Transverse colon (tissue), 4 donors: ENCODE measurements at regions of chr9 and their contacts with region 1.

Region 1: DNA sequence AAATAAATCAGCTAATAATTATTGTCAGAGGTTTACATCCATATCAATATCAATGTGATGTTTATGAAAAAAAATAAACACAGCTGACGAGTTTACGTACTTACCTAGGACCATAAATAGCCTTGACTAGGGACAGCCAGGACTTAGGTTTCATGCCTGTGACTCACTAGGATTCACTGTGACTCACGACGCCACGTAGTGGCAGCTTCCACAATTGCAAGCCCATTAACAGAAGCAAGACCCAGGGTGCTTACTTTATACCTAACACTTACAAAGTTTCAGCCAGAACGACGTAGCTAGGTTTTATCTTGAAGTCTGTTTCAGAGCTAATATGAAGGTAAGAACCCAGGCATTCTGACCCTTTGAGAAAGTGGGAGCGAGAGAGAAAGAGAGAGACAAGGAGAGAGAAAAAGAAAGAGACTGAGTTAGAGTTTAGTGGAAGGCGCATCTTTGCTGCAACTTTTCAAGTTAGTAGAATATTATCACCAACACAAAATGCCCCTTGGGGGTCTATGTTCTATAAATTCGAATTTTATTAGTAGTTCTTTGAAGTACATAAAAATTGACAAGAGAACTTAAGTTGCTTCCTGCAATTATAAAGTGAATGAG is 191.2 kb downstream of the GNA14 start:
- DNase-seq: peak; percentile 92
- H3K4me3 ChIP-seq: no peak overlapping the region
- H3K27ac ChIP-seq: no peak overlapping the region
- H3K4me1 ChIP-seq: peaks cover 0 to 6% (median 1%) of the 10 kb centered on the region in 4 donors
- H3K27me3 ChIP-seq: no peaks in the 10 kb centered on the region
- CTCF ChIP-seq: peak; percentile 88 to 96 (median 92)
- EP300 ChIP-seq: no peak
- POLR2A ChIP-seq: no peak

Region 2: DNA sequence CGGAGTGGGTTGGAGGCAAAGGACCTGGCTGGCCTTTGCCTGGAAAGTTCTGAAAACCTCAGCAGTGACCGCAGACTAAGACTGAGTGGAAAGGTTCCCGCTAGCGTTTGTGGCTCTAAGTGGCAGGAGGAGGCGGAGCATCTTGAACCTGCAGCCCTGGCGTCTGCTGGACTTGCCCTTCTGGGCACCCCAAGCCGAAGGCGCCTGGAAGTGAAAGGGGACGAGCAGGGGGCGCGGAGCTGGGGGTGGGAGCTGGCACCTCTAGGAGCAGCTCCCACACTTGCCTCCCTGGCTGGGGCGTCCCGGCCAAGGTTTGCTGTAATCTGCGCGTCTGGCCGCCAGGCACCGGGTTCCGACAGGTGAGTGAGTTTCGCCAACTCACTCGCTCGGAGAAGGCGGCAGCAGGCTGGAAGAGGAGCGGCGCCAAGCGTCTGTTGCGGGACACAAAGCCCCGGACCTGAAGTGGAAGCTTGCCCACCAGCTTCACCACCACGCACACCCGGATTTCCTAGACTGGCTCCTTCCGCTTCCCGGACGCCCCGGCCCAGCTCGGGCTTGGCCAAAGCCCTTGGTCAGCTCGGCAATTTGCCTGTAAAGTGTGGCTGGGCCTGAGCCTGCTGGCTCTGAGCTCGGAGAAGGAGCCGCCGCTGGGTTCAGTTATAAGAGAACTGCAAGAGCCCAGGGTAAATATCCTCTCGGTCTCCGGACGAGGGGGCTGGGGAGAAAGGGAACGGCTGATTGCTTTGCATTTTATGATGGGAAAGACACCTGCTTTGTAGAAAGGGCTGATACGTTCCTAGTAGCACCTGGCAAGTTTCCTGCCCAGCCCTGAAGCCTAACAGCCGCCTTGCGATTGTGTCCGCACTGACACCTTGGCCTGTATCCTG is 191.5 kb after region 1 on chr9 and contains the start of gene GNA14:
- in situ Hi-C with region 1: loop called in 1 of 4 experiments (anchors 25 kb)
- intact Hi-C with region 1: no loop called
- DNase-seq: peak; percentile 71
- H3K4me3 ChIP-seq: peak within 1 kb of the TSS; percentile 15 to 64 (median 55)
- H3K27ac ChIP-seq: peak within 1 kb of the TSS; percentile 75 to 84 (median 80)
- H3K4me1 ChIP-seq: peaks cover 0 to 26% (median 11%) of the 10 kb centered on the region in 4 donors
- H3K27me3 ChIP-seq: peaks cover 9% of the 10 kb centered on the region
- CTCF ChIP-seq: no peak
- EP300 ChIP-seq: no peak
- POLR2A ChIP-seq: peak; percentile 63
- total RNA-seq, gene GNA14: 9.4 to 64.9 (median 16.9) TPM

Region 3: DNA sequence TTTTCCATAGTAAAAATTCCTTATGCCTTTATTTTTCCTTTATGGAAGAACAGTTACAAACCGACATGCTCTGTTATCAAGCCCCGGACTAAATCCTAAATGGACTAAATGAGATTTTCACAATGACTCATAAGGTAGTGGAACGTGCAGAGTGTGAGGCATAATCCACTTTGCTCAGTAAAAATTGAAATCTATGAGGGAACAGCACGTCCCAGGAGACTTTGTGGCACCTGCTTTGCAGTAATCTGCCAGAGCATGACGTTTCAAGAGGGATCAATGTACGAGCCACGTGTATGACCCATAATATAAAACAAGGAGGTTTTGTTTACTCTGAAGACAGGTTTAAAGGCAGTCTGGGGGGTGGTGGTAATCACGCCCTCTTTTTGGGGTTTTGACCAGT is 275.0 kb after region 1 on chr9:
- in situ Hi-C with region 1: loop called in 1 of 4 experiments (anchors 25 kb)
- intact Hi-C with region 1: no loop called
- DNase-seq: peak; percentile 21
- H3K4me3 ChIP-seq: no peak overlapping the region
- H3K27ac ChIP-seq: no peak overlapping the region
- H3K4me1 ChIP-seq: peaks cover 0 to 11% (median 0%) of the 10 kb centered on the region in 4 donors
- H3K27me3 ChIP-seq: no peaks in the 10 kb centered on the region
- CTCF ChIP-seq: no peak
- EP300 ChIP-seq: no peak
- POLR2A ChIP-seq: no peak

Region 4: GRCh38 chr9:77751341-77752091 is 294.6 kb after region 1 on chr9:
- in situ Hi-C with region 1: loop called in 1 of 4 experiments (anchors 25 kb)
- intact Hi-C with region 1: loop called (anchors 5 kb)
- DNase-seq: no peak
- H3K4me3 ChIP-seq: no peak overlapping the region
- H3K27ac ChIP-seq: peak overlapping the region; percentile 37 to 68 (median 62)
- H3K4me1 ChIP-seq: peaks cover 9 to 29% (median 20%) of the 10 kb centered on the region in 4 donors
- H3K27me3 ChIP-seq: no peaks in the 10 kb centered on the region
- CTCF ChIP-seq: peak; percentile 50 to 62 (median 54)
- EP300 ChIP-seq: no peak
- POLR2A ChIP-seq: no peak

Region 5: DNA sequence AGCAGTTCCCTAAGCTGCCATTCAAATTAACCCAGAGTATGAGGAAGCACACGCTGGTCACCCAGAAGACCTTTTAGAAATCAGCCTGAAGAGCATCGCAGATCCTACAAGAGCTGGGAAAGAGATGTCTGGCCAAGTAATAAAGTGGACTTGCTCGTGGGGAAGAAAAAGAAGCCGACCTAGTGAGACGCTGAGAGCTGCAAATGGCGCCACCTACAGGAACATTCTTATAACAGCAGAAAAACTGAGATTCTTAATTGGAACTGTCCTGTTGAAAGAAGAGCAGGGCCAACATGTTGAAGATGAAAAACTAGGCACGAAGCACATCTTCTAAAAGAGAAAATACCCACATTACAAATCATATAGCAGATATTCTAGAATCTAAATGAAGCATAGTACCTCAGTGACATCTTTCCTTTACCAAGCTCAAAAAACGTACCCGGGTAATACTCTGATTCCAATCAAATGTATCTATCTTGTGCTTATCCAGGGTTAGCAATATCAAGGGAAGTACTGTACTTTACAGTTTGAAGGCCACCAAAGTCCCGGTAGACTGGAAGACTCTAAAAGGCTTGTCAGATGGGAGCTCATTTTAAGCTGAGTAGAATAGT is 578.6 kb after region 1 on chr9:
- in situ Hi-C with region 1: loop called in 1 of 4 experiments (anchors 10 kb)
- intact Hi-C with region 1: no loop called
- DNase-seq: peak; percentile 58
- H3K4me3 ChIP-seq: no peak overlapping the region
- H3K27ac ChIP-seq: peak overlapping the region; percentile 57 to 97 (median 79)
- H3K4me1 ChIP-seq: peaks cover 6 to 42% (median 21%) of the 10 kb centered on the region in 4 donors
- H3K27me3 ChIP-seq: no peaks in the 10 kb centered on the region
- CTCF ChIP-seq: peak; percentile 82 to 91 (median 85)
- EP300 ChIP-seq: no peak
- POLR2A ChIP-seq: no peak

Region 6: GRCh38 chr9:78130004-78130403 is 673.1 kb after region 1 on chr9:
- in situ Hi-C with region 1: loop called in 1 of 4 experiments (anchors 25 kb)
- intact Hi-C with region 1: no loop called
- DNase-seq: no peak
- H3K4me3 ChIP-seq: no peak overlapping the region
- H3K27ac ChIP-seq: no peak overlapping the region
- H3K4me1 ChIP-seq: peaks cover 0 to 9% (median 0%) of the 10 kb centered on the region in 4 donors
- H3K27me3 ChIP-seq: peaks cover 7% of the 10 kb centered on the region
- CTCF ChIP-seq: no peak
- EP300 ChIP-seq: no peak
- POLR2A ChIP-seq: no peak